ENCODE measurements at regions of chr1 and their contacts with region 1.

Region 1: DNA sequence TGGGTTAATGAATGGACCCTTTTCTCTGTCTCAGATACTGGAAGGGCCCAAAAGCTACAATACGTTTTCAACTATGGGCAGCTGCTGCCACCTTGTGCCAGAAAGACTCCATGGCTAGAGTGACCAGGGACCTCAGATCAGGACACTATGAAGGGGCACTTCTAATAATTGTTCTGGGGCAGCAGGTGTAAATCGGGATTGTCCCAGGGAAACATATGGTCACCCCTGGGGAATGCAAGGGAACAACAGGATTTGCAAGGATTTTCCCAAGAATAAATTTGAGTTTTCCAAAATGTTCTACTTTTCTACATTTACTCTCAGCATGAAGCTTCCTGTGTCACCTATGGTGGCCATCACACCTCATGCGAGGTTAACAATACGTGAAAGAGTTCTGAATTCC is 12.0 kb upstream of the FCAMR start:
- DNase-seq: peak; percentile 78
- ATAC-seq: peak; percentile 89
- H3K4me3 ChIP-seq: no peak overlapping the region
- H3K4me3 Mint-ChIP-seq: no peak overlapping the region
- H3K27ac ChIP-seq: no peak overlapping the region
- H3K27ac Mint-ChIP-seq: no peak overlapping the region
- H3K4me1 ChIP-seq: no peaks in the 10 kb centered on the region
- H3K4me1 Mint-ChIP-seq: no peaks in the 10 kb centered on the region
- H3K27me3 ChIP-seq: peaks cover 0 to 4% (median 0%) of the 10 kb centered on the region in 4 experiments
- H3K27me3 Mint-ChIP-seq: peaks cover 7% of the 10 kb centered on the region
- CTCF ChIP-seq: peak; percentile 90

Region 2: DNA sequence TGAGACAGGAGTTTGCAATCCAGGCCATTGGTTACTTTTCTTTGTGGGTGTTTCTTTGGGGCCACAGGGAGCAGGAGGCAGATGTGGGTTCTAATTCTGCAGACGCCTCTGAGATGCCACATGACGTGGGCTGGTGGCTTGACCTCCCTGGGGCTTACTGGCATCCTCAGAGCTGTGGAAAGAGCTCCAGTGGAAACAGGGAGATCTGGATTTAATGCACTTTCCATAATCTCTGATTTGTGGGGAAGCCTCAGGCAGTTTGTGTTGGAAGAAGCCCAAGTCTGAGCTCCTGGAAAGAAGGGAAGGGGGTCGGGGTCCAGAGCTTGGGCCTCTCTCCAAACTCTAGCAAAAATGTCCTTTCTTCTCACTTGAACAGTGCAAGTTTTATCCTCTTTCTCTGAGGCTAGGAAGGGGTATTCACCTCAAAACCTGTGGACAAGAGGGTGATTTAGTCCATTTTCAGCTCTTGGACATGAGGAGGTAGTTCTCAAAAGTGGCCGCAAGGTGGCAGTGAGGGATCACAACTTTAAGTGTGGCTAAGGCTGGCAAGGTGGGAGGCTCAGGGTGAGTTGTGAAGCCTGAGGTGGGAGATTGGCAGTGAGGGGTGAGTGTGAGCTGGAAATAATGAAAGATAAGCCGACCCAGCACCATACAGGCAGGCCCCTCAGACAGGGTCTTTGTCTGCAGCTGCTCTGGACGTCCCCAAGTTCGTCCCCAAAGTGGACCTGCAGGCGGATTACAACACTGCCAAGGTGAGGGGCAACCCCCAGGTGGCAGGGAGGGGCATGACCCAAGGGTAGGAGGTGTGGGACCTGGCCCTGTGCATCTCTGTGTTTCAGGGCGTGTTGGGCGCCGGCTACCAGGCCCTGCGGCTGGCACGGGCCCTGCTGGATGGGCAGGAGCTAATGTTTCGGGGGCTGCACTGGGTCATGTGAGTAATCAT is 502.8 kb before region 1 on chr1:
- CTCF ChIA-PET with region 1: interaction called, 11 read pairs
- POLR2A ChIA-PET with region 1: no interaction called
- intact Hi-C with region 1: no loop called
- DNase-seq: peak; percentile 80
- ATAC-seq: peak; percentile 79
- H3K4me3 ChIP-seq: no peak overlapping the region
- H3K4me3 Mint-ChIP-seq: no peak overlapping the region
- H3K27ac ChIP-seq: no peak overlapping the region
- H3K27ac Mint-ChIP-seq: peak overlapping the region; percentile 42
- H3K4me1 ChIP-seq: no peaks in the 10 kb centered on the region
- H3K4me1 Mint-ChIP-seq: peaks cover 4% of the 10 kb centered on the region
- H3K27me3 ChIP-seq: no peaks in the 10 kb centered on the region
- H3K27me3 Mint-ChIP-seq: no peaks in the 10 kb centered on the region
- CTCF ChIP-seq: peak; percentile 78

Region 3: GRCh38 chr1:206658264-206658980 is 323.8 kb before region 1 on chr1:
- CTCF ChIA-PET with region 1: interaction called, 61 read pairs
- POLR2A ChIA-PET with region 1: no interaction called
- intact Hi-C with region 1: loop called (anchors 1 kb)
- DNase-seq: peak; percentile 72
- ATAC-seq: peak; percentile 85
- H3K4me3 ChIP-seq: peak overlapping the region in 3 of 5 experiments; percentile 8 to 51 (median 12)
- H3K4me3 Mint-ChIP-seq: peak overlapping the region; percentile 49
- H3K27ac ChIP-seq: no peak overlapping the region
- H3K27ac Mint-ChIP-seq: peak overlapping the region; percentile 1
- H3K4me1 ChIP-seq: peaks cover 16 to 17% of the 10 kb centered on the region in 2 donors
- H3K4me1 Mint-ChIP-seq: peaks cover 21% of the 10 kb centered on the region
- H3K27me3 ChIP-seq: peaks cover 0 to 34% (median 11%) of the 10 kb centered on the region in 4 experiments
- H3K27me3 Mint-ChIP-seq: peaks cover 30% of the 10 kb centered on the region
- CTCF ChIP-seq: peak; percentile 96

Region 4: DNA sequence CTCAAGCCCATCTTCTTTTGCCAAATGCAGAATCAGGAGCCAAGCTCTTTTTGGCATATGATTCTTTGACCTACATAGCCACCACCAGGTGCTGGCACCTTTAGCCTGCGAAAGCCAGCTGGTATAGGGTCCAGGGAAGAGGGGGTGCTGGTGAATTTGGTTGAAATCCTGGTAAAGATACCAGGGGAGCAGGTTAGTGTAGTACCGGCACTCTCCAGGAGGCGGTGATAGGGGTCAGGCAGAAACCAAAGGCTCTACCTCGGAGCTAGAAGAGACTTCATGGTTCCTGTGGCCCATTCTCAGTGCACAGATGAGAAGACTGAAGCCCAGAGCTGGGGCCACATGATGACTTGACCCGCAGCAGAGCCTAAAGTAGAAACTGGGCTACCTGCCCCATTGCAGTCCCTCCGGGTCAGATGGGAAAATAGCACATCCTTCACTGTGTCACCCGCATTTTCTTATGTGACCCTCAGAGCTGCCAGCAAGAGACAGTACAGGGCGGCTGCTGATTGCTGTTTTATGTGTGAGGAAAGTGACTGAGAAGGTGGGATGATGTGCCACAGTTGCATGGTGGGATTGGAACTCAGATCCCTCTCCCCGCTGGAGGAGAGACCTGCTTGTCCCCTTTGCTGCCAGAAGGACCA is 247.6 kb before region 1 on chr1:
- CTCF ChIA-PET with region 1: interaction called, 118 read pairs
- POLR2A ChIA-PET with region 1: no interaction called
- intact Hi-C with region 1: loop called (anchors 1 kb)
- DNase-seq: peak; percentile 80
- ATAC-seq: peak; percentile 80
- H3K4me3 ChIP-seq: no peak overlapping the region
- H3K4me3 Mint-ChIP-seq: no peak overlapping the region
- H3K27ac ChIP-seq: no peak overlapping the region
- H3K27ac Mint-ChIP-seq: peak overlapping the region; percentile 69
- H3K4me1 ChIP-seq: peaks cover 20 to 37% of the 10 kb centered on the region in 2 donors
- H3K4me1 Mint-ChIP-seq: peaks cover 45% of the 10 kb centered on the region
- H3K27me3 ChIP-seq: no peaks in the 10 kb centered on the region
- H3K27me3 Mint-ChIP-seq: no peaks in the 10 kb centered on the region
- CTCF ChIP-seq: peak; percentile 86

Region 5: GRCh38 chr1:206856674-206857464 is 125.3 kb before region 1 on chr1:
- CTCF ChIA-PET with region 1: interaction called, 39 read pairs
- POLR2A ChIA-PET with region 1: no interaction called
- intact Hi-C with region 1: loop called (anchors 2 kb)
- DNase-seq: peak; percentile 43
- ATAC-seq: peak; percentile 61
- H3K4me3 ChIP-seq: no peak overlapping the region
- H3K4me3 Mint-ChIP-seq: no peak overlapping the region
- H3K27ac ChIP-seq: no peak overlapping the region
- H3K27ac Mint-ChIP-seq: no peak overlapping the region
- H3K4me1 ChIP-seq: no peaks in the 10 kb centered on the region
- H3K4me1 Mint-ChIP-seq: peaks cover 4% of the 10 kb centered on the region
- H3K27me3 ChIP-seq: peaks cover 0 to 4% (median 0%) of the 10 kb centered on the region in 4 experiments
- H3K27me3 Mint-ChIP-seq: peaks cover 18% of the 10 kb centered on the region
- CTCF ChIP-seq: peak; percentile 61

Region 6: GRCh38 chr1:206925106-206925736 is 57.0 kb before region 1 on chr1:
- CTCF ChIA-PET with region 1: interaction called, 114 read pairs
- POLR2A ChIA-PET with region 1: no interaction called
- intact Hi-C with region 1: loop called (anchors 5 kb)
- DNase-seq: peak; percentile 84
- ATAC-seq: peak; percentile 53
- H3K4me3 ChIP-seq: peak overlapping the region in 1 of 5 experiments; percentile 17
- H3K4me3 Mint-ChIP-seq: no peak overlapping the region
- H3K27ac ChIP-seq: peak overlapping the region; percentile 88 to 96
- H3K27ac Mint-ChIP-seq: no peak overlapping the region
- H3K4me1 ChIP-seq: peaks cover 82 to 84% of the 10 kb centered on the region in 2 donors
- H3K4me1 Mint-ChIP-seq: peaks cover 37% of the 10 kb centered on the region
- H3K27me3 ChIP-seq: no peaks in the 10 kb centered on the region
- H3K27me3 Mint-ChIP-seq: no peaks in the 10 kb centered on the region
- CTCF ChIP-seq: peak; percentile 19

Region 7: GRCh38 chr1:206992790-206993189 is 10.6 kb after region 1 on chr1:
- CTCF ChIA-PET with region 1: interaction called, 26 read pairs
- POLR2A ChIA-PET with region 1: no interaction called
- intact Hi-C with region 1: no loop called
- DNase-seq: no peak
- ATAC-seq: no peak
- H3K4me3 ChIP-seq: no peak overlapping the region
- H3K4me3 Mint-ChIP-seq: no peak overlapping the region
- H3K27ac ChIP-seq: no peak overlapping the region
- H3K27ac Mint-ChIP-seq: no peak overlapping the region
- H3K4me1 ChIP-seq: no peaks in the 10 kb centered on the region
- H3K4me1 Mint-ChIP-seq: no peaks in the 10 kb centered on the region
- H3K27me3 ChIP-seq: peaks cover 0 to 3% (median 0%) of the 10 kb centered on the region in 4 experiments
- H3K27me3 Mint-ChIP-seq: peaks cover 37% of the 10 kb centered on the region
- CTCF ChIP-seq: no peak